Transverse colon (tissue), 4 donors: ENCODE measurements at regions of chr2 and their contacts with region 1.

Region 1: DNA sequence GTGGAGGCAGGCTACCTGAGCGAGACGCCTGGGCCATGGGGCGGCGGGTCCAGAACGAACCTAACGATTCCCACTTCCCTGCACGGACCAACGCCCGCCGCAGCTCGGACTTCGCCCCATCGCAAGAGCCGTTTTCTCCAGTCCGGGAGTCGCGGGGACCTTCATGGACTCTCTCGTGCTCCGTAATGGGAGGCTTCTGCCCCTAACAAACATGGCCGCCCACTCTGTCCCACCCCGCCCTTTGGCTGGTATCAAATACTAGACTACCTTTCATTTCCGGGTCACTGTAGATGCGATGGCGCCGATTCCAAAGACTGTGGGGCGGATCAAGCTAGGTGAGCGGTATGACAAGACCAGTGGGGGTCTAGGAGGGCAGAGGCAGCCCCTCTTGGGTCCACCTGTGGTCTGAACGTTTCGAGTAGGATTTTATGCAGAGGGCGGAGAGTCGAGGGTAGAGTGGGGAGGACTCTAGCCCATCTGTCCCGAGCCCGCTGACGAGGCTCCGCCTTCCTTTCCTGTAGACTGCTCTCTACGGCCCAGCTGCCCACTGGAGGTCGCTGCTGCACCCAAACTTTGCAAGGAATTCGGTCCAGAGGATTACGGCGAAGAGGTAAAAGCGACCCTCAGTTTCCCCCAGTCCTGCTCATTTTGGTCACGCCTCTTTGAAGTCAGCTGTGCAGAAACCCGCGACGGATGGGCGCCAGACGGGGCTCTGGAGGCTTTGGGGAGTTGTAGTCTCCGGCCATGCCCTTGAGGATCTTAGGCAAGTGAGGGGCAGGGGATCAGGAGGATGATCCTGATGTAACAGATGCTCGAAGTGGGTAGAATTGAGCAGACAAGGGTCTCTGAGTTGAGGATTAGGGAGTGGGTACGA is at the starts of genes CCDC142 and TTC31:
- DNase-seq: peak; percentile 97
- H3K4me3 ChIP-seq: peak within 1 kb of the TSS; percentile 72 to 88 (median 82)
- H3K27ac ChIP-seq: peak within 1 kb of the TSS; percentile 88 to 97 (median 94)
- H3K4me1 ChIP-seq: peaks cover 15 to 29% (median 23%) of the 10 kb centered on the region in 4 donors
- H3K27me3 ChIP-seq: no peaks in the 10 kb centered on the region
- CTCF ChIP-seq: peak; percentile 82 to 94 (median 88)
- EP300 ChIP-seq: no peak
- POLR2A ChIP-seq: peak; percentile 79
- total RNA-seq, gene CCDC142: 49.7 to 93.1 (median 71.6) TPM
- total RNA-seq, gene TTC31: 16.9 to 36.0 (median 32.0) TPM

Region 2: GRCh38 chr2:74345272-74345943 is 137.6 kb before region 1 on chr2:
- in situ Hi-C with region 1: no loop called
- intact Hi-C with region 1: no loop called
- DNase-seq: no peak
- H3K4me3 ChIP-seq: no peak overlapping the region
- H3K27ac ChIP-seq: no peak overlapping the region
- H3K4me1 ChIP-seq: no peaks in the 10 kb centered on the region
- H3K27me3 ChIP-seq: no peaks in the 10 kb centered on the region
- CTCF ChIP-seq: no peak
- EP300 ChIP-seq: no peak
- POLR2A ChIP-seq: no peak

Region 3: GRCh38 chr2:74421221-74421870 is 61.7 kb before region 1 on chr2 and contains the starts of genes C2orf81 and WDR54:
- in situ Hi-C with region 1: no loop called
- intact Hi-C with region 1: no loop called
- DNase-seq: peak; percentile 91
- H3K4me3 ChIP-seq: peak within 1 kb of the TSS; percentile 39 to 70 (median 42)
- H3K27ac ChIP-seq: peak within 1 kb of the TSS; percentile 63 to 84 (median 70)
- H3K4me1 ChIP-seq: peaks cover 5 to 19% (median 7%) of the 10 kb centered on the region in 4 donors
- H3K27me3 ChIP-seq: no peaks in the 10 kb centered on the region
- CTCF ChIP-seq: no peak
- EP300 ChIP-seq: no peak
- POLR2A ChIP-seq: peak; percentile 43
- total RNA-seq, gene C2orf81: 0.82 to 1.3 TPM in 2 of 4 donors, not detected in the others
- total RNA-seq, gene WDR54: 2.3 to 7.0 TPM in 2 of 4 donors, not detected in the others

Region 4: GRCh38 chr2:74507145-74507925 is 24.3 kb after region 1 on chr2 and contains the start of gene PCGF1:
- in situ Hi-C with region 1: no loop called
- intact Hi-C with region 1: loop called (anchors 2 kb)
- DNase-seq: peak; percentile 100
- H3K4me3 ChIP-seq: peak within 1 kb of the TSS; percentile 44 to 81 (median 67)
- H3K27ac ChIP-seq: peak within 1 kb of the TSS; percentile 90 to 98 (median 92)
- H3K4me1 ChIP-seq: peaks cover 12 to 44% (median 36%) of the 10 kb centered on the region in 4 donors
- H3K27me3 ChIP-seq: peaks cover 41% of the 10 kb centered on the region
- CTCF ChIP-seq: peak; percentile 12 to 50 (median 25)
- EP300 ChIP-seq: no peak
- POLR2A ChIP-seq: peak; percentile 75
- total RNA-seq, gene PCGF1: 3.7 to 23.9 (median 19.3) TPM

Region 5: GRCh38 chr2:74529357-74530238 is 46.6 kb after region 1 on chr2 and contains the starts of genes AUP1 and HTRA2:
- in situ Hi-C with region 1: no loop called
- intact Hi-C with region 1: loop called (anchors 2 kb)
- DNase-seq: peak; percentile 99
- H3K4me3 ChIP-seq: peak within 1 kb of the TSS; percentile 79 to 95 (median 79)
- H3K27ac ChIP-seq: peak within 1 kb of the TSS; percentile 85 to 94 (median 92)
- H3K4me1 ChIP-seq: peaks cover 14 to 28% (median 19%) of the 10 kb centered on the region in 4 donors
- H3K27me3 ChIP-seq: no peaks in the 10 kb centered on the region
- CTCF ChIP-seq: no peak
- EP300 ChIP-seq: peak; percentile 56
- POLR2A ChIP-seq: peak; percentile 90
- total RNA-seq, gene AUP1: 164 to 264 (median 189) TPM
- total RNA-seq, gene HTRA2: 8.6 to 29.6 (median 21.0) TPM

Region 6: GRCh38 chr2:74587664-74588277 is 104.7 kb after region 1 on chr2:
- in situ Hi-C with region 1: loop called (anchors 5 to 25 kb)
- intact Hi-C with region 1: loop called (anchors 5 kb)
- DNase-seq: peak; percentile 65
- H3K4me3 ChIP-seq: no peak overlapping the region
- H3K27ac ChIP-seq: no peak overlapping the region
- H3K4me1 ChIP-seq: peaks cover 0 to 3% (median 0%) of the 10 kb centered on the region in 4 donors
- H3K27me3 ChIP-seq: peaks cover 18% of the 10 kb centered on the region
- CTCF ChIP-seq: peak; percentile 56 to 69 (median 66)
- EP300 ChIP-seq: no peak
- POLR2A ChIP-seq: no peak

Region 7: GRCh38 chr2:74893332-74893731 is 410.3 kb after region 1 on chr2:
- in situ Hi-C with region 1: no loop called
- intact Hi-C with region 1: no loop called
- DNase-seq: no peak
- H3K4me3 ChIP-seq: no peak overlapping the region
- H3K27ac ChIP-seq: no peak overlapping the region
- H3K4me1 ChIP-seq: no peaks in the 10 kb centered on the region
- H3K27me3 ChIP-seq: no peaks in the 10 kb centered on the region
- CTCF ChIP-seq: no peak
- EP300 ChIP-seq: no peak
- POLR2A ChIP-seq: no peak